Mammary epithelial cell (primary cell): ENCODE measurements at regions of chr14 and their contacts with region 1.

Region 1: GRCh38 chr14:46087604-46088003 is 564.0 kb downstream of the RPL10L start:
- DNase-seq: no peak
- H3K4me3 ChIP-seq: no peak overlapping the region
- H3K27ac ChIP-seq: no peak overlapping the region
- H3K4me1 ChIP-seq: no peaks in the 10 kb centered on the region
- H3K27me3 ChIP-seq: no peaks in the 10 kb centered on the region
- CTCF ChIP-seq: no peak

Region 2: GRCh38 chr14:45698462-45699134 is 389.0 kb before region 1 on chr14:
- CTCF ChIA-PET with region 1: interaction called, 10 read pairs
- dilution Hi-C with region 1: no loop called
- in situ Hi-C with region 1: no loop called
- intact Hi-C with region 1: no loop called
- DNase-seq: peak; percentile 42
- H3K4me3 ChIP-seq: no peak overlapping the region
- H3K27ac ChIP-seq: no peak overlapping the region
- H3K4me1 ChIP-seq: peaks cover 13% of the 10 kb centered on the region
- H3K27me3 ChIP-seq: no peaks in the 10 kb centered on the region
- CTCF ChIP-seq: no peak